ENCODE measurements at regions of chr19 and their contacts with region 1.

Region 1: GRCh38 chr19:1905071-1905862 is at the starts of genes ADAT3 and SCAMP4:
- DNase-seq: peak; percentile 95
- ATAC-seq: peak; percentile 79
- H3K4me3 ChIP-seq: peak within 1 kb of the TSS; percentile 70
- H3K27ac ChIP-seq: peak within 1 kb of the TSS; percentile 85
- H3K4me1 ChIP-seq: peaks cover 25% of the 10 kb centered on the region
- H3K27me3 ChIP-seq: no peaks in the 10 kb centered on the region
- CTCF ChIP-seq: no peak
- total RNA-seq, gene ADAT3: 8.4 and 10.3 TPM in 2 replicates
- total RNA-seq, gene SCAMP4: 61.5 and 73.7 TPM in 2 replicates

Region 2: DNA sequence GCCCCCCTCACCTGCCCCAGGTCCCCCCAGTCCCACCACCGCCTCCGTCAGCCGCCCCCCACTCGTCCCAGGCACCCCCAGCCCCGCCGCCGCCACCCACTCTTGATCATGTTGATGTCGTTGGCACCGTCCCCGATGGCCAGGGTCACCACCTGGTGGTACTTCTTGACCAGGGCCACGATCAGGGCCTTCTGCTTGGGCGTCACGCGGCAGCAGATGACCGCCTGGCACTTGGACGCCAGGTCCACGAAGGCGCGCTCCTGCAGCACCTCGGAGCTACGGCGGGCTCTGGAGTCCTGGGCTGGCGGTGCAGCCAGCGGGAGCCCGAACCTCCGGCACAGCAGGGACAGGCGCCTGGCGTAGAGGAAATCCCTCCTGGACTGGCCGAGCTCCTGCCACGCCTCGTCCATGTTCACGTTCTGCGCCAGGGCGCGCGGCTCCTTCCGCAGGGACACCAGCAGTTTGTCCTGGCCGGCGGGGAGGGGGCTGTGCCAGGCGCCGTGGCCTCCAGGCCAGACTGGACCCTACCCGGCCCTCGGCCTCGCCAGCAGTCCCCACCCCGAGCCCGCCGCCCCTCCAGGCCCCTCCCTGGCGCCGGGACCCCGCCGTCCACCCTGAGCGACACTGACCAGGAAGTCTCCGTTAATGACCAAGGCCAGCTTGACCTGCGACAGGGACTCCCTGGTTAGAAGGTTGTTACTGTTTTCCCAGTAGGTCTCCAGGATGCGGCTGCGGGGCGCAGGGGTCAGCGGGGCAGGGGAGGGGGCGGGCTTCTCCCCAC is 115.8 kb before region 1 on chr19:
- CTCF ChIA-PET with region 1: no interaction called
- POLR2A ChIA-PET with region 1: no interaction called
- intact Hi-C with region 1: no loop called
- DNase-seq: peak; percentile 14
- ATAC-seq: peak; percentile 63
- H3K4me3 ChIP-seq: peak overlapping the region; percentile 47; the same call in 1 of the 2 replicates
- H3K27ac ChIP-seq: no peak overlapping the region
- H3K4me1 ChIP-seq: no peaks in the 10 kb centered on the region
- H3K27me3 ChIP-seq: no peaks in the 10 kb centered on the region
- CTCF ChIP-seq: no peak

Region 3: DNA sequence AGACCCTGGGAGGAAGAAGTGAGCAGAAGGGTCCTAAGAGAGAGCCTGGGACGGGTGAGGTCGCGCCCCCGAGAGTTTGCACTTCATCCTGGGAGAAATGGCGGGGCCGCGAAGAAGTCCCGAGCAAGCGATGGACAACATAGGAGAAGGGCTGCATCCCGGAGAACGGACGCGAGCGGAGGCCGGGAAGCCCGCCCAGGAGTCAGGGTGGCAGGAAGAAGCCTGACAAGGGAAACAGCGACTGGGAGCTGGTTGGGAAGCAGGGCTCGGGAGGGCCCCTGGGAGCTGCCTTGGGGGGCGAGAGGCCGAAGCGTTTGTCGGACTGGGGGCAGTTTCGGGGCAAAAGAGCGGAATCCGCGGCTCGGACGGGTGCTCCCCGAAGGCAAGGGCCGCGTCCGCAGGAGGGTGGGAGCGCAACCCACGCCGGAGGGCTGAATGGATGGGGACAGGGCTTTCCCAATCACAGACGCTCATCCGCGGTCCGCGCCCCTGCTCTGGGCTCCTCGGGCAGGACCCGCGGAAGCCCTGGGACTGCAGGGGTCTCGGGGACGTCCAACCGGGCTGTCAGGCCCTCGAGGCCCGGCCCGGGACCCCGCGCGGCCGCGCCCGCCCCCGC is 20.4 kb before region 1 on chr19:
- CTCF ChIA-PET with region 1: interaction called, 10 read pairs
- POLR2A ChIA-PET with region 1: no interaction called
- intact Hi-C with region 1: loop called (anchors 1 kb)
- DNase-seq: no peak
- ATAC-seq: peak; percentile 39
- H3K4me3 ChIP-seq: peak overlapping the region; percentile 82
- H3K27ac ChIP-seq: peak overlapping the region; percentile 16; the same call in 1 of the 2 replicates
- H3K4me1 ChIP-seq: peaks cover 8% of the 10 kb centered on the region
- H3K27me3 ChIP-seq: no peaks in the 10 kb centered on the region
- CTCF ChIP-seq: no peak

Region 4: DNA sequence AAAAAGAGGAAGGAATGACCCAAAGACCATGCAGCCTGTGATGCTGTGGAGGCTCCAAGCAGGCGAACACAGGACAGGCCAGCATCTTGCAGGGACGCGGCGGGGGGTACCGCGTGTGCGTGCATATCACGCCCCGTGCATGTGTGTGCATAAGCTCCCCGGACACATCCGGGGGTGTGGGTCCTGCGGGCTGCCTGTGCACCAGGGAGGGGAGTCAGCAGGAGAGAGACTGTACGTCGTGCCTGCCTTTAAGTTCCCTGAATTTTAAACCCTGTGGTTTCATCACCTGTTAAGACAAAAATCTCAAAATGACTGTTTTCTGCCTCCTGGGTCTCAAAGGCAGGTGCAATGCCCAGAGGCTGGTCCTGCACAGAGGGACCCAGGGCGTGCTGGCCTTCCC is 16.6 kb after region 1 on chr19:
- CTCF ChIA-PET with region 1: no interaction called
- POLR2A ChIA-PET with region 1: no interaction called
- intact Hi-C with region 1: no loop called
- DNase-seq: no peak
- ATAC-seq: no peak
- H3K4me3 ChIP-seq: no peak overlapping the region
- H3K27ac ChIP-seq: no peak overlapping the region
- H3K4me1 ChIP-seq: no peaks in the 10 kb centered on the region
- H3K27me3 ChIP-seq: no peaks in the 10 kb centered on the region
- CTCF ChIP-seq: no peak

Region 5: DNA sequence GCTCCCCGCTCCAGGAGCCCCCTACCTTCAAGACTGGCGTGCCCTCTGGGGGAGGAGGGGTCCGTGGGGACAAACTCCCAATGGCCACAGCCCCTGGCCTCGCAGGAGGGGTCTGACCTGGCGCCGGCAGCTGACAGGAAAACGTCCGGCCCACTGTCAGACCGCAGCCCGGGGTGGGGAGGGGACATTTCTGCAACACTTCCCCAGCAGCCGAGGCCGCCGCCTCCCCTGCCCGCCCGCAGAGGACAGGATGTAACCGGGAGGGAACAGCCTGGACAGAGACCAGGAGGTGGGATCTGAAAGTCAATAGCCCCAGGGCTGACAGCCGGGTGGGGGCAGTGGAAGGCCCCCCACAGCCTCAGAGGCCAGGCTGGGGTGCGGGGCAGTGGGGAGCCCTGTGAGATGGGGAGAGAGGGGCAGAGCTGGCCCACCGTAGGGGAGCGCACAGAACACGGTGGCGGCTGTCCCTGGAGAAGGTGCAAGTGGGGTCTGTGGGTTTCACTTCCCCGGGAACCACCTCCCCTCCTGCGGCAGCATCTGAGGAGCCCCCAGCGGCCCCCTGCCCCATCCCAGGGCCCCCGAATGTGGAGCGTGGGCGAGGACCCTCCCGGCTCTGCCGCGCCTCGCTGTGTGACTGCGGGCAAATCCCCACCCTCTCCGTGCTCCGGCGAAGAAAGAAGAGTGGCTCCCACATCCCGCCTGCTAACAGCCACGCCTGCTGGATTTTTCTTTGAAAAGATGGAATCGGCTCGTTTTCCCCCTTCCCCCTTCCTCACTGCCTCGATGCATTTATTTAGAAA is 377.0 kb after region 1 on chr19 and contains the start of gene PEAK3:
- CTCF ChIA-PET with region 1: no interaction called
- POLR2A ChIA-PET with region 1: interaction called, 34 read pairs
- intact Hi-C with region 1: no loop called
- DNase-seq: no peak
- ATAC-seq: no peak
- H3K4me3 ChIP-seq: no peak within 1 kb of the TSS
- H3K27ac ChIP-seq: no peak within 1 kb of the TSS
- H3K4me1 ChIP-seq: no peaks in the 10 kb centered on the region
- H3K27me3 ChIP-seq: no peaks in the 10 kb centered on the region
- CTCF ChIP-seq: no peak
- total RNA-seq, gene PEAK3: not detected in 2 replicates